ENCODE measurements at regions of chr3 and their contacts with region 1.

Region 1: GRCh38 chr3:88003115-88003755 is 55.6 kb downstream of the CGGBP1 start:
- DNase-seq: peak in 5 of 9 donors; percentile 13 to 25 (median 15)
- ATAC-seq: peak; percentile 71
- H3K4me3 ChIP-seq: no peak overlapping the region
- H3K4me3 Mint-ChIP-seq: no peak overlapping the region
- H3K27ac ChIP-seq: no peak overlapping the region
- H3K27ac Mint-ChIP-seq: no peak overlapping the region
- H3K4me1 ChIP-seq: no peaks in the 10 kb centered on the region
- H3K4me1 Mint-ChIP-seq: peaks cover 0 to 17% (median 5%) of the 10 kb centered on the region in 7 donors
- H3K27me3 ChIP-seq: no peaks in the 10 kb centered on the region
- H3K27me3 Mint-ChIP-seq: peaks cover 0 to 17% (median 5%) of the 10 kb centered on the region in 5 donors

Region 2: DNA sequence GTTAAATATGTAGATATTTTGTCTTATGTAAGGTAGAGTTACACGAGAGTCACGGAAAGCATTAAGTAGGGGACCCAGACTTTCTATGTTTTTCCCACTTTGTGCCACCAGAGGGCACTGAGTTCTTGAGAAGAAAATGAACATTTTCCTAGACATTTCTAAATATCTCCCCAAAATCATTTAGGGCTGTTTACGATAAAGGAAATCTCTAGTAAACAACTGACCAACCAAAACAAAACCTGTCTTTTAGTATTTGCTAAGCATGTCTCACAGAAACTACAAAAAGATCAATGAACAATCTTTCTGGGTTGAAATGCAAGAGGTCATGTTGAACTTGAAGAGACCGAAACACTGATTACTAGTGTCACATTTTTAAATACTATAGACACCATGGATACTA is 743.0 kb before region 1 on chr3:
- CTCF ChIA-PET with region 1: interaction called, 4 read pairs
- POLR2A ChIA-PET with region 1: no interaction called
- intact Hi-C with region 1: loop called in 1 of 2 experiments (anchors 10 kb)
- DNase-seq: peak in 6 of 9 donors; percentile 1 to 46 (median 24)
- ATAC-seq: no peak
- H3K4me3 ChIP-seq: no peak overlapping the region
- H3K4me3 Mint-ChIP-seq: no peak overlapping the region
- H3K27ac ChIP-seq: no peak overlapping the region
- H3K27ac Mint-ChIP-seq: no peak overlapping the region
- H3K4me1 ChIP-seq: no peaks in the 10 kb centered on the region
- H3K4me1 Mint-ChIP-seq: peaks cover 0 to 12% (median 6%) of the 10 kb centered on the region in 7 donors
- H3K27me3 ChIP-seq: no peaks in the 10 kb centered on the region
- H3K27me3 Mint-ChIP-seq: peaks cover 0 to 13% (median 0%) of the 10 kb centered on the region in 5 donors

Region 3: GRCh38 chr3:87350364-87351199 is 652.7 kb before region 1 on chr3:
- CTCF ChIA-PET with region 1: interaction called, 8 read pairs
- POLR2A ChIA-PET with region 1: no interaction called
- intact Hi-C with region 1: loop called (anchors 1 kb)
- DNase-seq: peak in 7 of 9 donors; percentile 11 to 66 (median 47)
- ATAC-seq: peak; percentile 94
- H3K4me3 ChIP-seq: no peak overlapping the region
- H3K4me3 Mint-ChIP-seq: no peak overlapping the region
- H3K27ac ChIP-seq: no peak overlapping the region
- H3K27ac Mint-ChIP-seq: no peak overlapping the region
- H3K4me1 ChIP-seq: no peaks in the 10 kb centered on the region
- H3K4me1 Mint-ChIP-seq: no peaks in the 10 kb centered on the region
- H3K27me3 ChIP-seq: no peaks in the 10 kb centered on the region
- H3K27me3 Mint-ChIP-seq: peaks cover 0 to 8% (median 4%) of the 10 kb centered on the region in 5 donors

Region 4: GRCh38 chr3:87771341-87772192 is 231.7 kb before region 1 on chr3:
- CTCF ChIA-PET with region 1: interaction called, 3 read pairs
- POLR2A ChIA-PET with region 1: no interaction called
- intact Hi-C with region 1: loop called (anchors 1 kb)
- DNase-seq: peak in 7 of 9 donors; percentile 14 to 51 (median 39)
- ATAC-seq: peak; percentile 83
- H3K4me3 ChIP-seq: no peak overlapping the region
- H3K4me3 Mint-ChIP-seq: no peak overlapping the region
- H3K27ac ChIP-seq: no peak overlapping the region
- H3K27ac Mint-ChIP-seq: no peak overlapping the region
- H3K4me1 ChIP-seq: no peaks in the 10 kb centered on the region
- H3K4me1 Mint-ChIP-seq: peaks cover 0 to 2% (median 0%) of the 10 kb centered on the region in 7 donors
- H3K27me3 ChIP-seq: no peaks in the 10 kb centered on the region
- H3K27me3 Mint-ChIP-seq: peaks cover 0 to 30% (median 19%) of the 10 kb centered on the region in 5 donors

Region 5: DNA sequence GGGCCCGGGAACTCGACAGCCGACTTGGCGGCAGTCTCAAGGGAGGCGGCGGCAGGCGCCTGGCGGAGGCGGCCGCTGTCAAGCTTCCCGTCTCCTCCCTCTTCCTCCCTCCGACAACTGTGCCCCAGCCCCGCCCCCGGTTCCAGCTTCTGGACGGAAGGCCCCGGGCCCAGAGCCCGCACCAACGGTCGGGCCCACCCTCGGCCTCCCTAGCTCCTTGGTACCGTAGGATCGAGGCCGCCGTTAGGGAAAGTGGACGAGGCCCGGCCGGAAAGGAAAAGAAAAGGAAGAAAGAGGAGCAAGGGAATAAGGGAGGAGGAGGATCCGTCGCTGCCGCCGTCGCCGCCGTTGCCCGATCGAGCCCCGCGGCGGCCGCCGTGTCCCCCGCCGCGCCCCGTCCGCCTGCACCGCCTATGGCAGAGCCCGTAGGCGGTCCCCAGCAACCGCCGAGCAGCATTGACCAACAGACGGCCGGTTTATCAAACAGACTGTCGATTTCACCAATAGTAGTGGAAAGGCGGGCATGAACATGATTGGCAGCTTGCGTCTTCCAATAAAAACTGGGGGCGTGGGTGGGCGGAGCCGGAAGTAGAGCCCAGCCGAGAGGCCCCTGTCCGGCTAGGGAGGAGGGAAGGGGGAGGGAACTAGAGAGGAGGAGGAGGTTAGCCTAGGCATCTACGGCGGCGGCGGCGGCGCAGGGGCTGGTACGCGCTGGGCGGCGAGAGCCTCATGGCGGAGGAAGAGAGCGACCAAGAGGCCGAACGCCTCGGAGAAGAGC is 55.5 kb after region 1 on chr3 and contains the starts of genes CGGBP1 and ZNF654:
- CTCF ChIA-PET with region 1: no interaction called
- POLR2A ChIA-PET with region 1: no interaction called
- intact Hi-C with region 1: loop called in 1 of 2 experiments (anchors 2 kb)
- DNase-seq: peak; percentile 95 to 100 (median 99)
- ATAC-seq: peak; percentile 94
- H3K4me3 ChIP-seq: peak within 1 kb of the TSS; percentile 87
- H3K4me3 Mint-ChIP-seq: peak within 1 kb of the TSS; percentile 95 to 100 (median 98)
- H3K27ac ChIP-seq: peak within 1 kb of the TSS; percentile 81
- H3K27ac Mint-ChIP-seq: peak within 1 kb of the TSS; percentile 90 to 99 (median 96)
- H3K4me1 ChIP-seq: peaks cover 16 to 28% of the 10 kb centered on the region in 2 donors
- H3K4me1 Mint-ChIP-seq: peaks cover 47 to 73% (median 63%) of the 10 kb centered on the region in 7 donors
- H3K27me3 ChIP-seq: no peaks in the 10 kb centered on the region
- H3K27me3 Mint-ChIP-seq: no peaks in the 10 kb centered on the region
- total RNA-seq, gene CGGBP1: 87.0 to 153 (median 115) TPM
- total RNA-seq, gene ZNF654: 11.4 to 32.2 (median 25.4) TPM

Region 6: DNA sequence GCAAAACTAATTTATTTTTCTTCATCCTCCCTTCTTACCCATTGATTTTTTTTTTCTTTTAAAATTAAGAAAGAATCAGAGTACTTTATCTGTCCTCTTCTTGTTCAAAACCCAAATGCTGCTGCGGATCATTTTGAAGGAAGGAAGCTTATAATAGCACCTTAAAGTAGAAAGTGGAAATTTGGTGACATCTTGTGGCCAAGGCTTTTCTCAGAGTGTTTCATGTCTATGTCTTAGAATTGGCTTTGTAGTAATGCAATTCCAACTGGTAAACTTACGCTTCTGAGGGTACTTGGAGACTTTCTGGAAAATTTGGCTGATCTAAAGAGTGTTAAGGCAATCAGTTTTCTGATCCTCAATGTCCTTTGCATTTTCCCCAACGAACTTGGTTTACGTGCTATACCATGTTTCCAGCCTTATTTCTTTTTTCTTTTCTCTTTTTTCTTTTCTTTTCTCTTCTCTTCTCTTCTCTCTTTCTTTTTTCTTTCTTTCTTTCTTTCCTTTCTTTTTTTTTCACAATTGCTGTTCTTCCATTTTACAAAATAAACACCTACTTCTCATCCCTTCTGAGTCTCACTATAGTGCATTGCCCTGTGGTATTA is 177.3 kb after region 1 on chr3:
- CTCF ChIA-PET with region 1: no interaction called
- POLR2A ChIA-PET with region 1: no interaction called
- intact Hi-C with region 1: loop called (anchors 1 to 2 kb)
- DNase-seq: peak in 7 of 9 donors; percentile 9 to 38 (median 30)
- ATAC-seq: no peak
- H3K4me3 ChIP-seq: no peak overlapping the region
- H3K4me3 Mint-ChIP-seq: no peak overlapping the region
- H3K27ac ChIP-seq: no peak overlapping the region
- H3K27ac Mint-ChIP-seq: no peak overlapping the region
- H3K4me1 ChIP-seq: no peaks in the 10 kb centered on the region
- H3K4me1 Mint-ChIP-seq: peaks cover 0 to 8% (median 0%) of the 10 kb centered on the region in 7 donors
- H3K27me3 ChIP-seq: no peaks in the 10 kb centered on the region
- H3K27me3 Mint-ChIP-seq: peaks cover 0 to 14% (median 4%) of the 10 kb centered on the region in 5 donors

Measured in naive thymus-derived CD4-positive, alpha-beta T cell (primary cell).